Activated naive CD4-positive, alpha-beta T cell treated with anti-CD3 and anti-CD28 coated beads for 36 hours (primary cell): ENCODE measurements at regions of chr3 and their contacts with region 1.

Region 1: DNA sequence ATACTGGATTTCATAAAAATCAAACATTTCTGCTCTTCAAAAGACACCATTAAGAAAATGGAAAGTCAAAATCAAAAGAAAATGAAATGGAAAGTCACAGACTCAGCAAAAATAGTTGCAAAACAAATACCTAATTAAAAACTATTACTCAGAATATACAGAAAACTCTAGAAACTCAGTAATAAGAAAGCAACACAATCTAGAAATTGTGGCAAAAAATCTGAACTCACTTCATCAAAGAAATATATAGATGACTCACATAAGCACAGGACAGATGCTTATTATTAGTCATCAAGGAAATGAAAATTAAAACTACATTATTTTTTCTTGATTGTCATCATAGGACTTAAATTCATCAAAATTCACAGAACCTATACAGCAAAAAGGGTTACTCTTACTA is 430.0 kb downstream of the SHQ1 start:
- DNase-seq: no peak
- H3K4me3 Mint-ChIP-seq: no peak overlapping the region
- H3K27ac Mint-ChIP-seq: no peak overlapping the region
- H3K4me1 Mint-ChIP-seq: peaks cover 59% of the 10 kb centered on the region
- H3K27me3 Mint-ChIP-seq: no peaks in the 10 kb centered on the region

Region 2: DNA sequence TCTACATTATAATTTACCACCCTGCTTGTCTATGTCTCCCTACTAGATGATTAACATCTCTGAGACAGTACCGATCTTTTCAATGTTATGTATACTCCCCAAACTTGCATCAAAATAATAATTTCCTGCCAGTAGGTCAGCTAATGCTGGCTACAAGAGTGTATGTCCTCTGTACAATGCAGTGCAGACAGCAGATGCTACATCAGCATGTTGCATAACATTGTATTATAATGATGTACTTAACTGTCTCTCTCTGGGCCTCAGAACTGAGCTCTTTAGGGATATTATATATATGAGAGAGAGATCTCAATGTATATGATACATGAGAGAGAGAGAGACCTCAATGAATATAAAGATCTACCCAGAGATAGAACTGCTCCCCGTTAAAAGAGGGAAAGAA is 26.6 kb before region 1 on chr3:
- CTCF ChIA-PET with region 1: no interaction called
- intact Hi-C with region 1: loop called (anchors 2 kb)
- DNase-seq: no peak
- H3K4me3 Mint-ChIP-seq: no peak overlapping the region
- H3K27ac Mint-ChIP-seq: no peak overlapping the region
- H3K4me1 Mint-ChIP-seq: peaks cover 46% of the 10 kb centered on the region
- H3K27me3 Mint-ChIP-seq: no peaks in the 10 kb centered on the region

Region 3: GRCh38 chr3:72407766-72408165 is 10.5 kb before region 1 on chr3:
- CTCF ChIA-PET with region 1: interaction called, 3 read pairs
- intact Hi-C with region 1: loop called (anchors 1 kb)
- DNase-seq: no peak
- H3K4me3 Mint-ChIP-seq: no peak overlapping the region
- H3K27ac Mint-ChIP-seq: no peak overlapping the region
- H3K4me1 Mint-ChIP-seq: peaks cover 85% of the 10 kb centered on the region
- H3K27me3 Mint-ChIP-seq: no peaks in the 10 kb centered on the region

Region 4: DNA sequence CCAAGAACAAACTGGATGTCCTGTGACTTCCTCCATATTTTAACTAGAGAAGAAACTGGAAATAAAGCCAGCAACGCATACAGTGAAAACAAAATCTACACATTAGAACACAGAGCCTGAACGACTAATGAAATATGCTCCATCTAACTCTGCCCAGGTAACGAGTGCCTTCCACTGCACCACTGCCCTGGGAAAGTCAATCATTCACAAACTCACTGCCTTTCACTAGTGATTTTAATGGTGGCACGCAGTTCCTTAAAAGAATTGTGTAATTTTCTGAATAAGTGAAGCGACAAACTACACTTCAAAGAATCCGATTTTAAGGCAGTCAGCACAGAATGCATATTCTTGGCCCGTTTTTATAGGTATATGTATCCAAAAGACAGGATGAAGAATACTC is 14.0 kb after region 1 on chr3:
- CTCF ChIA-PET with region 1: no interaction called
- intact Hi-C with region 1: loop called (anchors 1 kb)
- DNase-seq: no peak
- H3K4me3 Mint-ChIP-seq: no peak overlapping the region
- H3K27ac Mint-ChIP-seq: no peak overlapping the region
- H3K4me1 Mint-ChIP-seq: peaks cover 75% of the 10 kb centered on the region
- H3K27me3 Mint-ChIP-seq: no peaks in the 10 kb centered on the region

Region 5: GRCh38 chr3:72437661-72438406 is 19.6 kb after region 1 on chr3:
- CTCF ChIA-PET with region 1: no interaction called
- intact Hi-C with region 1: loop called (anchors 1 kb)
- DNase-seq: no peak
- H3K4me3 Mint-ChIP-seq: no peak overlapping the region
- H3K27ac Mint-ChIP-seq: no peak overlapping the region
- H3K4me1 Mint-ChIP-seq: peaks cover 78% of the 10 kb centered on the region
- H3K27me3 Mint-ChIP-seq: no peaks in the 10 kb centered on the region

Region 6: DNA sequence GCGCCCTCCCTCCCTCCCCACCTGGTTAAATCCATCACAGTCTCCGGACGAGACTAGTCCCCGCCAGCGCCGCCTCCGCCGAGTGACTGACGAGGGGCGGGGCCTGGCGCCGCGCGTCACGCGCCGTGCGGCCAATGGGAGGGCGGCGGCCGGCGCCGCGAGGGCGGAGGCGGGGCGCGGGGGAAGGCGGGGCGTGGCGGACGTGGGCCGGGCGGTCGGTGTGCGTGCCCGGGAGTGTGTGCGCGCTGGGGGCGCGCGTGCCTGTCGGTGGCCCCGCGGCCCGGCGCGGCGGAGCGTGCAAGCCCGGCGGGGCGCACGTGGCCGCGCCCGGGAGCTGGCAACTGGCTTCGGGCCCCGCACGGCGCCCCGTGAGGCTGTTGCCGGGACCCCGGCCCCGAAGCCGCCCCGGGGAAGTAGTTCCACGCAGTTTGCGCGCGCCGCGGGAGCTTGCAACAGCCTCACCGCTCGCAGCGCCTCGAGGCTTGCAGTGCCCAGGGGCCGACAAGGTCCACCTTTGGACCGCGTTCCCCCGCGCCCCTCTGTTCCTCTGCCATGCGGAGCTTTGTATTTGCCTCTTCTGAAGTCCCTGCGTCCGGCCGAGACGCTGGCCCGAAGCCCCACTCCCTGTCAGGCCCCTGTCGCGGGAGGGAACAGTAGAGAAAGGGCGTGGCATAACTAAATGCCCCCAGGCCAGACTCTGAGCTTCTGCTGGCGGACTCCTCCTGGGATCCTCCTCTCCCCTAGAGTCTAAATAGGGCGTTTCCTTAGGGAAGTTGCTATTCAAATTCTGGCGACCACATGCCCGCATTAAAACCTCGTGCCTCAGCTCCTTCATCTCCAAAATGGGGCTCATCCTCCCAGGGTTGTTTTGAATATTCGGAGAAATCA is 29.1 kb after region 1 on chr3:
- CTCF ChIA-PET with region 1: no interaction called
- intact Hi-C with region 1: loop called (anchors 2 kb)
- DNase-seq: peak; percentile 88
- H3K4me3 Mint-ChIP-seq: peak overlapping the region; percentile 54
- H3K27ac Mint-ChIP-seq: no peak overlapping the region
- H3K4me1 Mint-ChIP-seq: peaks cover 37% of the 10 kb centered on the region
- H3K27me3 Mint-ChIP-seq: peaks cover 12% of the 10 kb centered on the region

Region 7: DNA sequence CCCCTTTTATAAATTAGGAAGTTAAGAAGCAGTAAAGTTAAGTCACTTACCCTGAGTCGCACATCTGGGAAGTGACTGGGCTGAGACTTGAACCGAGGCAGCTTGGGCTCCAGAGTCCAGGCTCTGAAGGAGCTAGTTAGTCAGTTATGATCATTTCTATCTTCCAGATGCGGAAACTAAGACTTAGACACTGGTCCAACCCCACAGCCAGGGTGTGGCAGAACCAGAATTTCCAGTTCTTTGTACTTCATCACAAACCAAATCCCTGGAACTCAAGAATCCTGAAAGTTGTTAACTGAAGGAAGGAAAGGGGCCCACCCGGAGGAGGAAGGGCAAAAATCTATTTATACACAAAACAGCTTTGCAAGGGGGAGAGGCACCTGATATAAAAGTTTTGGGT is 40.1 kb after region 1 on chr3:
- CTCF ChIA-PET with region 1: no interaction called
- intact Hi-C with region 1: loop called (anchors 1 kb)
- DNase-seq: no peak
- H3K4me3 Mint-ChIP-seq: no peak overlapping the region
- H3K27ac Mint-ChIP-seq: no peak overlapping the region
- H3K4me1 Mint-ChIP-seq: peaks cover 17% of the 10 kb centered on the region
- H3K27me3 Mint-ChIP-seq: peaks cover 17% of the 10 kb centered on the region